ENCODE measurements at regions of chr12 and their contacts with region 1.

Region 1: GRCh38 chr12:24979976-24980725 is 31.2 kb upstream of the BCAT1 start:
- DNase-seq: no peak
- H3K4me3 ChIP-seq: no peak overlapping the region
- H3K27ac ChIP-seq: no peak overlapping the region
- H3K4me1 ChIP-seq: no peaks in the 10 kb centered on the region
- H3K27me3 ChIP-seq: no peaks in the 10 kb centered on the region
- CTCF ChIP-seq: no peak
- EP300 ChIP-seq: no peak
- POLR2A ChIP-seq: no peak

Region 2: DNA sequence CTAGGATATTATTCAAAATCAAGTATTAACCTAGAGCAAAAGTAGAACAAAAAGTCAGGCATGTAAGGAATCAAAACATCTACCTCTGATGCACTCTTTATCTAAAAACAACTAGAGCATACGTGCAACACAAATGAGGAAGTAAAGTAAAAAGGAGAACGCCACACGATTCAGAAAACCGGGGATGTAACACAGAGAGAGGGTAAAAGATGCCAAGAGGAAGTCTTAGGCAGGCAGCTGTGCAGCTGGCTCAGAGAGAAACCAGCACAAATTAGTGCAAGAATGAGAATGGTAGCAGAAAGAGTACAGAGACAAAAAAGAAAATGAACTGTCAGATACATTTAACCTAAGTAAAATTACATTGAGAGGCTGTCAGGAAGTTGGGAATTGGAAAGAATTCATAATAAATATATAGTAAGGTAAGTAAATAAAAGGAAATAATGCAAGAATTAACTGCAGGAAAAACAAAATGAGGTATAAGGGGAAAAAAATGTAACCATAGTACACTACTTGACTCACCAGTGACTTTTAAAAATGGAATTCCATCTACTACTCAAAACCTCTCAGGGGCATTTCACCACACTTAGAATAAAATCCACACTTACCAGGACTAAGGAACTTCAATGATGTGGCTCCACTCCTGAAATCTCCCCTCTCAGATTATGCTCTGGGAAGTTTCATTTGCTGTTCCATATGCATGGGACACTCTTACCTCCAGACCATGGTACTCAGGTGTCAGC is 48.3 kb before region 1 on chr12:
- in situ Hi-C with region 1: no loop called
- intact Hi-C with region 1: no loop called
- DNase-seq: no peak
- H3K4me3 ChIP-seq: no peak overlapping the region
- H3K27ac ChIP-seq: no peak overlapping the region
- H3K4me1 ChIP-seq: no peaks in the 10 kb centered on the region
- H3K27me3 ChIP-seq: no peaks in the 10 kb centered on the region
- CTCF ChIP-seq: no peak
- EP300 ChIP-seq: no peak
- POLR2A ChIP-seq: no peak

Region 3: DNA sequence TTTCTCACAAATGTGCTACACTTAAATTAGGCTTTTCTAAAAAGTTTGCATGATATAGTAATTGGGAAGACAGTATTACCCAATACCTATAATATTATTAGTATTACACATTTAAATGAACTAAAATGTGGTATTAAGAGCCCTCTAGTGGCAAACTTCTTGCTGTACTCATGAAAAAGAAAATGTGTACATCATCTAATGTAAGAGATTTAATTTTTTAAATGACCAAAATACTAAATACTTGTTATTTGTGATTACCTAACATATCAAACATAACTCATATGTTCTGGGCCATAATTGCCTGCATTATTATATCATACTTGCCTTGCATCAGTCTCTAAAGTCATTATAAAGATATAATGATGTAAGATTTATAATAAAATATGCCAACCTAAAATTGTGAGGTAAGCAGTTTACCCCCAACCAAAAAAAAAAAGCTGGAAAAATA is 150.6 kb after region 1 on chr12:
- in situ Hi-C with region 1: loop called in 1 of 4 experiments (anchors 10 kb)
- intact Hi-C with region 1: no loop called
- DNase-seq: no peak
- H3K4me3 ChIP-seq: no peak overlapping the region
- H3K27ac ChIP-seq: no peak overlapping the region
- H3K4me1 ChIP-seq: no peaks in the 10 kb centered on the region
- H3K27me3 ChIP-seq: no peaks in the 10 kb centered on the region
- CTCF ChIP-seq: peak; percentile 53 to 63 (median 55)
- EP300 ChIP-seq: no peak
- POLR2A ChIP-seq: no peak

Region 4: GRCh38 chr12:25186788-25187397 is 206.7 kb after region 1 on chr12:
- in situ Hi-C with region 1: no loop called
- intact Hi-C with region 1: no loop called
- DNase-seq: no peak
- H3K4me3 ChIP-seq: peak overlapping the region in 1 of 4 donors; percentile 9
- H3K27ac ChIP-seq: no peak overlapping the region
- H3K4me1 ChIP-seq: no peaks in the 10 kb centered on the region
- H3K27me3 ChIP-seq: no peaks in the 10 kb centered on the region
- CTCF ChIP-seq: no peak
- EP300 ChIP-seq: no peak
- POLR2A ChIP-seq: no peak

Measured in transverse colon (tissue), 4 donors.